ENCODE measurements at regions of chr20 and their contacts with region 1.

Region 1: DNA sequence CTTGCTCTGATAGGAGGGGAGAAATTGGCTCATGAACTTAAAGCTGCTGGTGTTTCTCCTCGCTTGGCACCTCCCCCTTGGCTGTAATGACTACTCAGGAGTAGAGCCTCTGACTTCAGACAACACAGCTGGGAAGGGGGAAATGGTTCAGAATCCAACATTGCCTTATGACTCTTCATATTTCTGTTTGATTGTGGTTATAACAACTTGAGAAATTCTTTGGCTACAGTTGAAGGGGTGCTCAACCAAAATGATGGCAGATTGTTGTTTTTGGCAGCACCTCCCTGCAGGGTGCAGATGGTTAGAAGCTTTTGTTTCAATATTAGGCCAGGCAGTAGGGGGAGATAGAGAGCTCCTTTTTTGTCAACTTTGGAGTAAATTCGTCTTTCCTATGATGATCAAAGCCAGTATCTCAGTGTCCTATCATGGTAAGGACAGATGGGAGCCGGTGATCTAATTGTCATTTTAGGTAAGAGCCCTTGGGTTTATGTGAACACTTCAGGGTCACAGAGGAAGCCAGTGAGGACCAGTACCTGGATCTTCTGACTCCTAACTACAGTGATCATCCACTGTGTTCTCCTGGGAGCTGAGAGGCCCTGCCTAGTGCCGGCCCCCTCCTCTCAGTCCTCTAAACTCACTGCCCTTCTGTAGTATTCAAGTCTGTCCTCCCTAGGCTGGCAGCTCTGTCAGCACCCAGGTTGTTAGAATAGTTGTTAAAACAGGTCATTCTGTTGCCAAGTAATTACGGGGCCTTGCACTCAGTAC is 39.9 kb downstream of the RPRD1B start:
- DNase-seq: peak; percentile 44
- H3K4me3 ChIP-seq: no peak overlapping the region
- H3K27ac ChIP-seq: no peak overlapping the region
- H3K4me1 ChIP-seq: no peaks in the 10 kb centered on the region
- CTCF ChIP-seq: peak; percentile 83

Region 2: DNA sequence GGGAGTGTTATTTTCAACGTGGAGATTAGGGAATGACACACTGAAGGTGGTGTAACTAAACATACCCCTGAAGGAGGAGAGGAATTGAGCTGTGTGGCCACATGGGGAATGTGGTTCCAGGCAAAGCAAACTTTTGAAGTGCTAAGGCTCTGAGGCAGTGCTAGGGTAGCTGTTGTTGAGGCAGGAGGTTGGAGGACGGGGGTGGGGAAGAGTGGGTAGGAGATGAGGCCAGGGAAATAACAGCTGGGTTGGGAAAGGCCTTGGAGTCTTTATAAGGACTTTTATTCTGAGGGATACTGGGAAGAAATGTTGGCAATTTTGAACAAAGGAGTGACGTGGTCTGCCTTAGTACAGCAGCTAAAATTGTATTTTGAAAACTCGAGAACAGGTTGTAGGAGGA is 26.9 kb before region 1 on chr20:
- CTCF ChIA-PET with region 1: no interaction called
- POLR2A ChIA-PET with region 1: no interaction called
- intact Hi-C with region 1: no loop called
- DNase-seq: no peak
- H3K4me3 ChIP-seq: no peak overlapping the region
- H3K27ac ChIP-seq: no peak overlapping the region
- H3K4me1 ChIP-seq: no peaks in the 10 kb centered on the region
- CTCF ChIP-seq: no peak

Region 3: GRCh38 chr20:38165089-38165989 is 91.8 kb after region 1 on chr20 and contains the start of gene TGM2:
- CTCF ChIA-PET with region 1: no interaction called
- POLR2A ChIA-PET with region 1: no interaction called
- intact Hi-C with region 1: loop called (anchors 5 kb)
- DNase-seq: peak; percentile 40
- H3K4me3 ChIP-seq: no peak within 1 kb of the TSS
- H3K27ac ChIP-seq: no peak within 1 kb of the TSS
- H3K4me1 ChIP-seq: no peaks in the 10 kb centered on the region
- CTCF ChIP-seq: peak; percentile 82
- total RNA-seq, gene TGM2: not detected in 2 replicates

Measured in OCI-LY7 (cell line).